ENCODE measurements at regions of chr6 and their contacts with region 1.

Region 1: DNA sequence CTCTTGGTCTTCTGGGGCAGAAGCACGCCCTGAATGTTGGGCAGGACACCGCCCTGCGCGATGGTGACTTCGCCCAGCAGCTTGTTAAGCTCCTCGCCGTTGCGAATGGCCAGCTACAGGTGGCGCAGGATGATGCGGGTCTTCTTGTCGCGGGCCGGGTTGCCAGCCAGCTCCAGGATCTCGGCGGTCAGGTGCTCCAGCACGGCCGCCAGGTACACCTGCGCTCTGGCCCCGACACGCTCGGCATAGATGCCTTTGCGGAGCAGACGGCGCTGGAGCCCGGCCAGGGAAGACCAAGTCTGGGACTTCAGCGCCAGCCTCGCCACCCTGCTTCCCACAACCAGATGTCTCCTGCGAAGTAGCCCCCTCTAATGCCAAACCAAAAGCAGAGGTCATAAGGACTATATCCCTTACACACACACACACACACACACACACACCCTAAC is 8.0 kb upstream of the SLC17A3 start:
- DNase-seq: peak; percentile 53
- ATAC-seq: peak; percentile 85
- H3K4me3 Mint-ChIP-seq: peak overlapping the region; percentile 62
- H3K27ac Mint-ChIP-seq: peak overlapping the region; percentile 12
- H3K4me1 Mint-ChIP-seq: peaks cover 3% of the 10 kb centered on the region
- H3K27me3 Mint-ChIP-seq: no peaks in the 10 kb centered on the region

Region 2: DNA sequence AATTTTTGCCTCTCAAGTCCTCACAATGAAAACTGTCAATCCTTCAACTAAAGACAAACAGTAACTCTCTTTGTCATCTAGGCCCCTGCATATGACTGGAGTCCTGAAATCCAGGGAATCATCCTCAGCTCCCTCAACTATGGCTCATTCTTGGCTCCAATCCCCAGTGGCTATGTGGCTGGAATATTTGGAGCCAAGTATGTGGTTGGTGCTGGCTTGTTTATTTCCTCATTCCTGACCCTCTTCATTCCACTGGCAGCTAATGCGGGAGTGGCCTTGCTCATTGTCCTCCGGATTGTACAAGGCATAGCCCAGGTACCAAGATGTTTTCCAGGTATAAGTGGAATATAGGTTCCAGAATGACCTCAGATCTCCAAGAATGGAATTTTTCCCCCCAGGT is 112.1 kb before region 1 on chr6:
- CTCF ChIA-PET with region 1: no interaction called
- DNase-seq: no peak
- ATAC-seq: no peak
- H3K4me3 Mint-ChIP-seq: no peak overlapping the region
- H3K27ac Mint-ChIP-seq: no peak overlapping the region
- H3K4me1 Mint-ChIP-seq: peaks cover 2% of the 10 kb centered on the region
- H3K27me3 Mint-ChIP-seq: peaks cover 14% of the 10 kb centered on the region

Region 3: GRCh38 chr6:25788305-25788922 is 93.7 kb before region 1 on chr6:
- CTCF ChIA-PET with region 1: interaction called, 12 read pairs
- DNase-seq: peak; percentile 46
- ATAC-seq: no peak
- H3K4me3 Mint-ChIP-seq: no peak overlapping the region
- H3K27ac Mint-ChIP-seq: no peak overlapping the region
- H3K4me1 Mint-ChIP-seq: peaks cover 8% of the 10 kb centered on the region
- H3K27me3 Mint-ChIP-seq: no peaks in the 10 kb centered on the region

Region 4: GRCh38 chr6:25899123-25899522 is 17.0 kb after region 1 on chr6:
- CTCF ChIA-PET with region 1: no interaction called
- DNase-seq: no peak
- ATAC-seq: no peak
- H3K4me3 Mint-ChIP-seq: no peak overlapping the region
- H3K27ac Mint-ChIP-seq: no peak overlapping the region
- H3K4me1 Mint-ChIP-seq: peaks cover 2% of the 10 kb centered on the region
- H3K27me3 Mint-ChIP-seq: peaks cover 3% of the 10 kb centered on the region

Region 5: GRCh38 chr6:26043384-26044139 is 161.5 kb after region 1 on chr6:
- CTCF ChIA-PET with region 1: no interaction called
- DNase-seq: peak; percentile 87
- ATAC-seq: peak; percentile 71
- H3K4me3 Mint-ChIP-seq: peak overlapping the region; percentile 78
- H3K27ac Mint-ChIP-seq: peak overlapping the region; percentile 99
- H3K4me1 Mint-ChIP-seq: peaks cover 29% of the 10 kb centered on the region
- H3K27me3 Mint-ChIP-seq: no peaks in the 10 kb centered on the region